ENCODE measurements at regions of chr2 and their contacts with region 1.

Region 1: DNA sequence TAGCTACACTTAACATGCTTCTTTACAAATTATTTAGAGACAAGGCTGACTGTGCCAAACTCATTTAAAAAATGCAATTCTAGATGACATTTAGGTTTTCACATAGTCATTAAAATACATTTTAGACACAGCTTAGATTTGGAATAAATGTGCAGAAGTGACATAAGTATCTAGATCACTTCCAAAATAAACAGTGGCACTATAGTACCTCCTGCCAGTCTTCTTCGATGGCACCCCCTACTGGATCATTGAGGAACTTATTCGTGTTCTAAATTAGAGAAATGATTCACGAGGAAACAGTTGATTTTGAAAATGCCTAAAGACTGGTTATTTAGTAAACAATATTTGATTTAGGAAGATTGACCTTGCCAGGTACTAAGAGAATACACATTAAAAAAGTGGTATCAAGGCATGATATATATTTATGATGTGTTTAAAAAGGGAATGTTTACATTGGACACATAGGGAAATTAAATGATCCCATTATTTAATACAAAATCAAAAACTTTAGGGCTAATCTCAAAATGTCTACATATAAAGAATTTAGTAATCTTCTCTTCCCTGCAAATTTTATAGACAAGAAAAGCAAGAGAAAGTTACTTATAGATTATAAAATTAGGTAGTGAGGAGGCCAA is 323.9 kb downstream of the XIRP2 start:
- DNase-seq: peak; percentile 65 to 85 (median 81)
- H3K4me3 ChIP-seq: no peak overlapping the region
- H3K27ac ChIP-seq: no peak overlapping the region
- H3K4me1 ChIP-seq: peaks cover 0 to 7% (median 0%) of the 10 kb centered on the region in 4 experiments
- H3K27me3 ChIP-seq: no peaks in the 10 kb centered on the region

Region 2: DNA sequence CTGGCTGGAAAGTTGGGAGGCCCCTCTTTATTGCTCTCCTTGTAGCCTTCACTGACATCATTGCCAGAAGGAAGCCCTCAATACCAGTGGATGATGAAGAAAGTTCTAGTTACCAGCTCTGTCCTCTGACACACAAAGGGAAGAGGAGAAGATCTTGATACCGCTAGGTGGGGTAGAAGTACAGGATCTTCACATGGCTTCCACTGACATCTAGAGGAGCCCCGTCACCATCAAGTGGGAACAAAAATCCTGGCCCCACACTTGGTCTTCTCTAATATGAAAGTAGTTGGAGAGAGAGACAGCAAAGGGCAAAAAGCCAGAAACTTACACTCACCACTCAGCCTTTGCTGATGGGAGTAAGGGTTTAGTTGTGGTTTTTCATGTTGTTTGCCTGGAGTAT is 311.4 kb before region 1 on chr2:
- CTCF ChIA-PET with region 1: no interaction called
- POLR2A ChIA-PET with region 1: no interaction called
- DNase-seq: no peak
- H3K4me3 ChIP-seq: no peak overlapping the region
- H3K27ac ChIP-seq: no peak overlapping the region
- H3K4me1 ChIP-seq: peaks cover 0 to 8% (median 2%) of the 10 kb centered on the region in 4 experiments
- H3K27me3 ChIP-seq: no peaks in the 10 kb centered on the region

Region 3: GRCh38 chr2:167127135-167127534 is 85.0 kb before region 1 on chr2:
- CTCF ChIA-PET with region 1: interaction called, 53 read pairs
- POLR2A ChIA-PET with region 1: no interaction called
- DNase-seq: peak; percentile 57 to 75 (median 74)
- H3K4me3 ChIP-seq: no peak overlapping the region
- H3K27ac ChIP-seq: no peak overlapping the region
- H3K4me1 ChIP-seq: peaks cover 8 to 22% (median 10%) of the 10 kb centered on the region in 4 experiments
- H3K27me3 ChIP-seq: no peaks in the 10 kb centered on the region

Region 4: GRCh38 chr2:167200019-167200418 is 12.1 kb before region 1 on chr2:
- CTCF ChIA-PET with region 1: interaction called, 17 read pairs
- POLR2A ChIA-PET with region 1: no interaction called
- DNase-seq: peak in 2 of 3 donors; percentile 64 to 81
- H3K4me3 ChIP-seq: no peak overlapping the region
- H3K27ac ChIP-seq: peak overlapping the region in 1 of 2 experiments; percentile 30
- H3K4me1 ChIP-seq: peaks cover 12 to 43% (median 21%) of the 10 kb centered on the region in 4 experiments
- H3K27me3 ChIP-seq: no peaks in the 10 kb centered on the region

Region 5: DNA sequence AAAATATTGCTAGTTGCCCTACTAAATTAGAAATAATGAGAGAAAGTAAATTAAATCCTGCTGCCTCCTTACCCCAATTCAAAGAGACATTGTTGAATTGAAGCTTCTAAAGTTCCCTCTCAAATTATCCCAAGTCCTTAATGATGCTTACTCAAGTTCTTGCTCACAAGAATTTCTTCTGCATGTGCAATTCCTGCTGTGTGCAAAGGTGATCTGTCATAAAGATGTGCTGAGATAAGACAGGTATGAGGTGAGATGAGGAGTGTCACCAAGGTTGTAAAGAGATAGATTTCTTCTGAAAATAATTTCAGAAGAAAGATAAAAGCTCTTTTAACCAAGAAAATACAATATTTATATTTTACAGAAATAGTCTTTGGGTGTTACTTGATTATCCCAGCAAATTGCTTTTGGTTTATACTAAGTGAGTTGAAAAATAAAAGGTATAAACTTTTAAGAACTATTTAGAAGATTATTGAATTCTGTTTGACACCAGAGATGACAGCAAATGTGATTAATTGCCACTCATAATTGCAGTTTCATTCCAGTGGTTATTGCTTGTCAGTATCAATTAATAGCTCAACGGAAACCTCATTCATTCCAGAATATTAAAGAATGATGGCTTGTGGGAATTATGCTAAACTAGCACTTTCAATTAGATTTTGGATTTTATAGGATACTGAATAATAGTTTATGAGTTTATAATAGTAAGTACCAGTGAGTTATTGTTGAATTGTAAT is 360.9 kb after region 1 on chr2:
- CTCF ChIA-PET with region 1: no interaction called
- POLR2A ChIA-PET with region 1: no interaction called
- DNase-seq: no peak
- H3K4me3 ChIP-seq: no peak overlapping the region
- H3K27ac ChIP-seq: no peak overlapping the region
- H3K4me1 ChIP-seq: no peaks in the 10 kb centered on the region
- H3K27me3 ChIP-seq: no peaks in the 10 kb centered on the region

Measured in common myeloid progenitor, CD34-positive (primary cell).